ENCODE measurements at regions of chr10 and their contacts with region 1.

Region 1: DNA sequence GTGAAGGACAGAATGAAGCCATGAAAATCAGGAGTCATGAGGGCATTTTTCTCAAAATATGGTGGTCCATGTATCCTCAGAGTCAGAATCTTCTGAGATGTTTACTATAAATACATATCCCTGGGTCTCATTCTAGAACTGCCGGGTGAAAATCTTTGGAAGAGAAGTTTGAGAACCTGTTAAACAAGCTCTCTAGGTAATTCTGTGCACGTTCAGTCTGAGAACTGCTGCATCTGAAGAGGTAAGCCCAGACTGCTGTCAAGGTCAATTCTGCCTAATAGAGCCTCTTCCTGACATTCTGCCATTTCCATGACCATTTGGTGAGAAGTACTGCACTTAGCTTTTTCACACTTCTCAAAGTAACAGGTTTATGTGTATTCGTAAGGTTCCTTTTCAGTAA is 85.9 kb upstream of the CCNY start:
- DNase-seq: no peak
- H3K27ac ChIP-seq: no peak overlapping the region
- CTCF ChIP-seq: no peak

Region 2: DNA sequence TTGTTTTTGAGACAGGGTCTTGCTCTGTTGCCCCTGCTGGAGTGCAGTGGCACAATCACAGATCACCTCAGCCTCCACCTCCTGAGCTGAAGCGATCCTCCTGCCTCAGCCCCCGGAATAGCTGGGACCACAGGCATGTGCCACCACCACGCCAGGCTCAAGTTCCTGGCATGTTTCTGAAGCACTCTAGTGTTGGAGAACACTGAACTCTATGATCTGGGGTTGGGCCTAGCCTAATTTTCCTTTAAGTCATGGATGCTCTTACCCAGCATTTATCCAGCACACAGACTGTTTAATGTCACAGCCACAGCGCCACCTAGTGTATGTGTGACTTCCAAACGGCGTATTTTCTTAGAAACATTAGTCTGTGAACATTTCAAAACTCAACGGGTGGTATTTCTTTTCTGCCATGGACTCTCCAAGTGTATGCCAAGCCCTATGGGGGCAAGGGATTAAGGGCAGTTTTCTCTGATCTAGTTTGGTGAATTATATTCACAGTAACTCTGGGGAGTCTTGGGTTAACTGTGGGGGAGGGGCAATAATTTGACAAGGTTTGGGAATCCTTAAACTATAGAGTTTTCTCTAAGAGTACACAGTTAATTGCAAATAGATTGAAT is 31.9 kb before region 1 on chr10:
- CTCF ChIA-PET with region 1: no interaction called
- POLR2A ChIA-PET with region 1: no interaction called
- DNase-seq: peak; percentile 51
- H3K27ac ChIP-seq: no peak overlapping the region
- CTCF ChIP-seq: peak; percentile 81

Region 3: DNA sequence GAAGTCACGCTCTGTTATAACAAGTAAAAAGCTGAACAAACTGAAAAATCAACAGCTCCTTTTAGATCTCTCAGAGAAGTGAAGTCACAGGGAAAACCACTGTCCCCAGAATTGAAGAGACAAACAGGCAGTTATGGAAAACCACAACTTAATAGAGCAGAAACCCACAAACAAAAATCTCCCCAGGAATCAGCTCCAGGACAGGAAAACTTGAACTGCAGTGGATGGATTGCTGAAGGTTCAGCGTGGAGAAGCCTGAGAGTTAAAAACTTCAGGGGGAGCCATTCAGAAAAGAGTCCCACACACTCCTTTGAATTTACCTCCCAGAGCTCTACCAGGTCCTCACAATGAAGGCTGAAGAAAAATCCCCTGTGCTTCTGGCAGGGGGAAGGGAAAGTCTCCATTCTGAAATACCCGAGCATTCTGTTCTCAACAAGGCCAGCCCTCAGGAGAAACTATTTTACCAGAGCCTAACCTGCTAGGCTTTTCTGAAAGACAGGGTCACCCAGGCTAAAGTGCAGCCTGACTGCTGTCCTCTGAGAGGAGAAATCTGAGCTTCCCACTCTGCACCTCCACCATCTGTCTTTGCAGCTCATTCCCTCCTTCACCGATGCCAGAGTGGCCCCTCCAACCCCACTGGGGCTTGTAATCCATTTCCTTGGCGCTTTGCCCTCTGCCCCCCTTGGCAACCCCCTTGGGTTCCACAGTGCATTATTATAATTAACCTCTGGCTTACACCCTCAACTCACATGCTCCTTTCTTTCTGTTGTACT is 20.9 kb after region 1 on chr10:
- CTCF ChIA-PET with region 1: no interaction called
- POLR2A ChIA-PET with region 1: no interaction called
- DNase-seq: no peak
- H3K27ac ChIP-seq: no peak overlapping the region
- CTCF ChIP-seq: no peak

Region 4: GRCh38 chr10:35322636-35323035 is 72.2 kb after region 1 on chr10:
- CTCF ChIA-PET with region 1: interaction called, 11 read pairs
- POLR2A ChIA-PET with region 1: no interaction called
- DNase-seq: no peak
- H3K27ac ChIP-seq: no peak overlapping the region
- CTCF ChIP-seq: no peak